Activated T-helper 2 cell treated with anti-CD3 and anti-CD28 coated beads, Interferon-gamma antibody, Interleukin-2, Interleukin-4, amounts not matched to agents 10 μg/mL and 5 μg/mL and 100 μg/mL, durations not matched to agents 14 hours and 24 hours and 36 hours (primary cell): ENCODE measurements at regions of chr5 and their contacts with region 1.

Region 1: GRCh38 chr5:36507332-36507952 is 99.0 kb upstream of the SLC1A3 start:
- DNase-seq: peak; percentile 52
- H3K4me3 Mint-ChIP-seq: no peak overlapping the region
- H3K27ac Mint-ChIP-seq: no peak overlapping the region
- H3K4me1 Mint-ChIP-seq: no peaks in the 10 kb centered on the region
- H3K27me3 Mint-ChIP-seq: peaks cover 2% of the 10 kb centered on the region

Region 2: DNA sequence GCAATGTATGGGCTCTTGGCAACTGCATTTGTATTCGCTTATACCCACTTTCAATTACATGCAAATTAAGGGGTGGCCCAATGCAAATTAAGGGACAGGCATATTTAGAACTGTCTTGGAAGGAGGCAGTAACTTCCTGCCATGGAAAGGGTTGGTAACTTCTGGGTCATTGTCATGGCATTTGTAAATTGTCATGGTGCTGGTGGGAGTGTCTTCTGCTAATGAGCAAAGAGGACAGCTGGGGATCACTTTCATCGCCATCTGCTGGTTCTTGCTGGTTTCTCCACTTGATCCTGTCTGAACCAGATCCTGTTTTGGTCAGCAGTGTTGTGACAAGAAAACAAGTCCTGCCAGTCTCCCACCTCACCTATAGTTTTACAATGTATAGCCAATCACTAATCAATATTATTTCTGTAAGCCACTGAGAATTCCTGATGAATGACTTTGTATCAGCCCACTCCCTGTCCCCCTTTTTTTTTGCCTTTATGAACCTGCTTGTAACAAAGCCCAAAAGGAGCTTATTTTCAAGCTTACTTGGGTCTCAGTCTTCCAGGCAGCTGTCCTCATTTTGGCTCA is 417.4 kb before region 1 on chr5:
- intact Hi-C with region 1: loop called (anchors 5 kb)
- DNase-seq: no peak
- H3K4me3 Mint-ChIP-seq: no peak overlapping the region
- H3K27ac Mint-ChIP-seq: no peak overlapping the region
- H3K4me1 Mint-ChIP-seq: no peaks in the 10 kb centered on the region
- H3K27me3 Mint-ChIP-seq: peaks cover 14% of the 10 kb centered on the region

Region 3: GRCh38 chr5:36414869-36415282 is 92.6 kb before region 1 on chr5:
- intact Hi-C with region 1: loop called (anchors 1 kb)
- DNase-seq: no peak
- H3K4me3 Mint-ChIP-seq: no peak overlapping the region
- H3K27ac Mint-ChIP-seq: no peak overlapping the region
- H3K4me1 Mint-ChIP-seq: peaks cover 14% of the 10 kb centered on the region
- H3K27me3 Mint-ChIP-seq: peaks cover 4% of the 10 kb centered on the region